ENCODE measurements at regions of chr15 and their contacts with region 1.

Region 1: GRCh38 chr15:74396445-74397238 is 29.2 kb upstream of the CYP11A1 start:
- DNase-seq: peak in 5 of 9 experiments; percentile 31 to 74 (median 49)
- ATAC-seq: peak; percentile 39
- H3K4me3 ChIP-seq: no peak overlapping the region
- H3K4me3 Mint-ChIP-seq: no peak overlapping the region
- H3K27ac ChIP-seq: no peak overlapping the region
- H3K27ac Mint-ChIP-seq: peak overlapping the region; percentile 69
- H3K4me1 ChIP-seq: peaks cover 54% of the 10 kb centered on the region
- H3K4me1 Mint-ChIP-seq: peaks cover 58% of the 10 kb centered on the region
- H3K27me3 ChIP-seq: no peaks in the 10 kb centered on the region
- H3K27me3 Mint-ChIP-seq: no peaks in the 10 kb centered on the region
- CTCF ChIP-seq: no peak

Region 2: DNA sequence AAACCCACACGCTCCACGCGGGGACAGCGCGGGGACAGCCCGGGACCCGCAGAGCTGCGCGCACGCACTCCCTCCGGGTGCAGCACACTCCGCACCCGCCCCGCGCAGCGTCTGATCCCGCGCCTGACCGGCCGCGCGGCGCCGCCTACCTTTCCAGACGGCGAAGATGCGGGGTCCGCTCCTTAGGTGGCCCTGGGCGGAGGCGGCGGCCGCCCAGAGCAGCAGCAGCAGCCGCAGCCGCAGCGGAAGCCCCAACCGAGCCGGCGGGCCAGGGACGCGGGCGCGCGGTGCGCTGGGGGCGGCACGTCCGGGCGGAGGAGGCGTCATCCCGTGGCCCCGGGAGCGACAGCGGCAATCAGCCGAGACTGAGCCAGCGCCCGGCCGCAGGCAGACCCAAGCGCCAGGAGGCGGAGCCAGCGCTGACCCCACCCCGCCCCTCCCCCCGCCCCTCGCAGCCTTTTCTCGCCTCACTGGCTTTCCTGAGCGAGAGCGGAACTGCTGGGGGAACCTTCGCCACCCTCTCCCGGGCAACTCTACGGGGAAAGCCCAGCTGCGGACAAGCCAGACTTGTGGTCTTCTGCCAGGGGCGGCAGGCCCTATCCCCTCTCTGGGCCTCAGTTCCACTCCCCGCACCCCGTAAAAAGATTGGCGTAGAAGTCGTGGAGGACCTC is 37.1 kb after region 1 on chr15 and contains the start of gene SEMA7A:
- CTCF ChIA-PET with region 1: interaction called, 13 read pairs
- POLR2A ChIA-PET with region 1: no interaction called
- intact Hi-C with region 1: loop called (anchors 2 to 5 kb)
- DNase-seq: peak; percentile 49 to 91 (median 72)
- ATAC-seq: peak; percentile 81
- H3K4me3 ChIP-seq: peak within 1 kb of the TSS; percentile 56 to 68
- H3K4me3 Mint-ChIP-seq: peak within 1 kb of the TSS; percentile 80
- H3K27ac ChIP-seq: peak within 1 kb of the TSS; percentile 23 to 73
- H3K27ac Mint-ChIP-seq: peak within 1 kb of the TSS; percentile 57
- H3K4me1 ChIP-seq: peaks cover 16% of the 10 kb centered on the region
- H3K4me1 Mint-ChIP-seq: peaks cover 40% of the 10 kb centered on the region
- H3K27me3 ChIP-seq: no peaks in the 10 kb centered on the region
- H3K27me3 Mint-ChIP-seq: no peaks in the 10 kb centered on the region
- CTCF ChIP-seq: no peak
- total RNA-seq, gene SEMA7A: 8.8 to 9.4 TPM

Region 3: DNA sequence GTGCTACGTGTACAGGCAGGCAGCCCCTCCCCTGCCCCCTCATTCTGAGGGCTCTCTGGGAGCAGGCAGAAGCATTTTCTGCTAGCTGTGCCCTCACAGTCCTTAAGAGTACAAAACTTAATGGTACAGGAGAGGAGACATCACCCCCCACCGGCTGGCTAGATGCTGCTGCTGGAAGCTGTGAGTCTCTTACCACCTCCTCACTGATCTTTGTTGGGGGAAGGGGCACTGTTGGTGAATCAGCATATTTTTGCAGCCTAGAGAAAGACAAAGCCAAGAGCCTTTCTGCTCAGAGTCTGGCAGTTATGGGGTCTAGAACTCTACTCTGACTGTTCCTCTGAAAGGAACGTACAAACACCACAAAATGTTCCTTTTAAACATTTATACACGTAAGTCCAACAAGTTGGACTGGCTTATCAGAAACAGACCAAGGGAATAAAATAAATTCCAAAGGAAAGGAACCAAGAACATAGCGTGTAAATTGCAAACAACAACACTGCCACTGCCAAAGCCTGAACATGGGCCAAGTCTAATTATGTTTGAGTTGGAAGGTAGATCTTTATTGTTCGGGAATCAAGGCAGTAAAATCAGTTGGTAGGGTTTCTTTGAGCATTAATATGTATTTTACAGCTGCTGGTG is 246.2 kb after region 1 on chr15:
- CTCF ChIA-PET with region 1: no interaction called
- POLR2A ChIA-PET with region 1: no interaction called
- intact Hi-C with region 1: no loop called
- DNase-seq: no peak
- ATAC-seq: no peak
- H3K4me3 ChIP-seq: no peak overlapping the region
- H3K4me3 Mint-ChIP-seq: no peak overlapping the region
- H3K27ac ChIP-seq: no peak overlapping the region
- H3K27ac Mint-ChIP-seq: no peak overlapping the region
- H3K4me1 ChIP-seq: no peaks in the 10 kb centered on the region
- H3K4me1 Mint-ChIP-seq: peaks cover 10% of the 10 kb centered on the region
- H3K27me3 ChIP-seq: no peaks in the 10 kb centered on the region
- H3K27me3 Mint-ChIP-seq: no peaks in the 10 kb centered on the region
- CTCF ChIP-seq: no peak

Measured in CD8-positive, alpha-beta T cell (primary cell).